PC-3 (cell line): ENCODE measurements at regions of chr3 and their contacts with region 1.

Region 1: DNA sequence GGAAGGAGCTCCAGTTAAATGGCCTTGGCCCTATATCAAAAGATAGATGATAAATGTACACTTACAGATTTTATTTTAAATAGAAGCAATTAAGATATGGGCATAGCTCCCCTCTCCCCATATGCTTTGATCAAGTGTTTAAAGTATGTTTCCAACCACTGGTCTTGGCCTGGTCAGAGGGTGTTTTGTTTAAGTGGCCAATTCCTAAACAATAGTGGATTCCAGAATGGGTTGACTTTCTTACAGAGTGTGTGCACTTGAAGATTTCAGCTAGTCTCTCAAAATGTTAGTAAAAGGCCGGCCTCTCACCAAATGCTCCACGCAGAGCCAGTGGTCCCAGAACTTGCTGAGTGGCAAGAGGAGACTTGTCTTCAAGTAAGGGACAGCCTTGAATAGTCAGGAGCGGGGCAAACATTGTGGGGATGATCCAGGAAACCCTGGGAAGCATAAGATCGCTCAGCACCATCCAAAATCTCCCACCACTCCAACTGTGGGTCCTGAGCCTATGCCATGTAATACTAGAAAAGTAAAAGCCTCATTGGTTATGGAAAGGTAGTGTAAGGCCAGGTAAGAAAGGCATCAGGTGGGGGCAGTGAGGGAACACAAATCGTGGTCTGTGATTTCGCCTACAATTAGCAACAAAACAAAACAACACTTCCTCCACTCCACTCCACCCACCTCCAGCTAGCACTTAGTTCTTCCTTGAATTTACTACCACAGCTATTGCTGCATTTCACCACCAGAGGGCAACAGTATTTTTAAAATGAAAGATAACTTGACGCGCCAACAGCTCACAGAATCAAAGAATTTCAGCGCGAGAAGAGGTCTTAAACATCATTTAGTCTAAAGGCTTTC is 4.8 kb downstream of the RARRES1 start:
- DNase-seq: peak; percentile 84
- ATAC-seq: no peak
- H3K4me3 ChIP-seq: no peak overlapping the region
- H3K27ac ChIP-seq: peak overlapping the region; percentile 100
- H3K4me1 ChIP-seq: peaks cover 54% of the 10 kb centered on the region
- H3K27me3 ChIP-seq: no peaks in the 10 kb centered on the region
- CTCF ChIP-seq: peak; percentile 83

Region 2: GRCh38 chr3:158539414-158540014 is 187.9 kb before region 1 on chr3:
- CTCF ChIA-PET with region 1: no interaction called
- POLR2A ChIA-PET with region 1: no interaction called
- intact Hi-C with region 1: loop called (anchors 5 kb)
- DNase-seq: peak; percentile 58
- ATAC-seq: no peak; the same call in 1 of the 2 replicates
- H3K4me3 ChIP-seq: no peak overlapping the region
- H3K27ac ChIP-seq: no peak overlapping the region
- H3K4me1 ChIP-seq: no peaks in the 10 kb centered on the region
- H3K27me3 ChIP-seq: no peaks in the 10 kb centered on the region
- CTCF ChIP-seq: peak; percentile 63

Region 3: GRCh38 chr3:158659454-158660237 is 67.8 kb before region 1 on chr3:
- CTCF ChIA-PET with region 1: interaction called, 13 read pairs
- POLR2A ChIA-PET with region 1: no interaction called
- intact Hi-C with region 1: loop called (anchors 1 kb)
- DNase-seq: peak; percentile 70
- ATAC-seq: peak; percentile 65
- H3K4me3 ChIP-seq: no peak overlapping the region
- H3K27ac ChIP-seq: peak overlapping the region; percentile 49
- H3K4me1 ChIP-seq: 0 out of 2 replicates have a peak, but pooled peaks cover 2% of the 10 kb centered on the region
- H3K27me3 ChIP-seq: no peaks in the 10 kb centered on the region
- CTCF ChIP-seq: peak; percentile 73

Region 4: GRCh38 chr3:158696618-158697017 is 30.8 kb before region 1 on chr3:
- CTCF ChIA-PET with region 1: interaction called, 3 read pairs
- POLR2A ChIA-PET with region 1: no interaction called
- intact Hi-C with region 1: loop called (anchors 1 kb)
- DNase-seq: peak; percentile 63
- ATAC-seq: peak; percentile 74
- H3K4me3 ChIP-seq: no peak overlapping the region
- H3K27ac ChIP-seq: peak overlapping the region; percentile 45
- H3K4me1 ChIP-seq: peaks cover 32% of the 10 kb centered on the region
- H3K27me3 ChIP-seq: no peaks in the 10 kb centered on the region
- CTCF ChIP-seq: no peak

Region 5: GRCh38 chr3:158790901-158791589 is 63.6 kb after region 1 on chr3:
- CTCF ChIA-PET with region 1: interaction called, 19 read pairs
- POLR2A ChIA-PET with region 1: interaction called, 3 read pairs
- intact Hi-C with region 1: loop called (anchors 1 kb)
- DNase-seq: peak; percentile 78
- ATAC-seq: no peak
- H3K4me3 ChIP-seq: no peak overlapping the region
- H3K27ac ChIP-seq: peak overlapping the region; percentile 100
- H3K4me1 ChIP-seq: peaks cover 46% of the 10 kb centered on the region
- H3K27me3 ChIP-seq: no peaks in the 10 kb centered on the region
- CTCF ChIP-seq: peak; percentile 79

Region 6: GRCh38 chr3:158845765-158846350 is 118.4 kb after region 1 on chr3:
- CTCF ChIA-PET with region 1: no interaction called
- POLR2A ChIA-PET with region 1: no interaction called
- intact Hi-C with region 1: no loop called
- DNase-seq: peak; percentile 62
- ATAC-seq: peak; percentile 50
- H3K4me3 ChIP-seq: no peak overlapping the region
- H3K27ac ChIP-seq: no peak overlapping the region
- H3K4me1 ChIP-seq: no peaks in the 10 kb centered on the region
- H3K27me3 ChIP-seq: no peaks in the 10 kb centered on the region
- CTCF ChIP-seq: peak; percentile 78